Activated CD8-positive, alpha-beta T cell treated with anti-CD3 and anti-CD28 coated beads, Interleukin-2, amount 10 ng/mL, durations not matched to agents 7 days and 5 days (primary cell): ENCODE measurements at regions of chr18 and their contacts with region 1.

Region 1: GRCh38 chr18:50967714-50968661 is at the start of gene ELAC1:
- DNase-seq: peak; percentile 69
- ATAC-seq: peak; percentile 94
- H3K4me3 Mint-ChIP-seq: peak within 1 kb of the TSS; percentile 94
- H3K27ac Mint-ChIP-seq: peak within 1 kb of the TSS; percentile 94
- H3K4me1 Mint-ChIP-seq: peaks cover 20% of the 10 kb centered on the region
- H3K27me3 Mint-ChIP-seq: no peaks in the 10 kb centered on the region
- total RNA-seq, gene ELAC1: 8.7 to 9.4 TPM

Region 2: GRCh38 chr18:50878345-50879301 is 89.4 kb before region 1 on chr18 and contains the start of gene ME2:
- CTCF ChIA-PET with region 1: no interaction called
- POLR2A ChIA-PET with region 1: interaction called, 27 read pairs
- DNase-seq: peak; percentile 93
- ATAC-seq: peak; percentile 96
- H3K4me3 Mint-ChIP-seq: peak within 1 kb of the TSS; percentile 88
- H3K27ac Mint-ChIP-seq: peak within 1 kb of the TSS; percentile 98
- H3K4me1 Mint-ChIP-seq: peaks cover 24% of the 10 kb centered on the region
- H3K27me3 Mint-ChIP-seq: peaks cover 6% of the 10 kb centered on the region
- total RNA-seq, gene ME2: 91.2 to 92.5 TPM

Region 3: GRCh38 chr18:50944245-50944932 is 23.6 kb before region 1 on chr18:
- CTCF ChIA-PET with region 1: no interaction called
- POLR2A ChIA-PET with region 1: no interaction called
- DNase-seq: no peak
- ATAC-seq: no peak
- H3K4me3 Mint-ChIP-seq: no peak overlapping the region
- H3K27ac Mint-ChIP-seq: no peak overlapping the region
- H3K4me1 Mint-ChIP-seq: peaks cover 4% of the 10 kb centered on the region
- H3K27me3 Mint-ChIP-seq: no peaks in the 10 kb centered on the region

Region 4: GRCh38 chr18:51915176-51915575 is 947.2 kb after region 1 on chr18:
- CTCF ChIA-PET with region 1: no interaction called
- POLR2A ChIA-PET with region 1: no interaction called
- DNase-seq: no peak
- ATAC-seq: no peak
- H3K4me3 Mint-ChIP-seq: no peak overlapping the region
- H3K27ac Mint-ChIP-seq: no peak overlapping the region
- H3K4me1 Mint-ChIP-seq: no peaks in the 10 kb centered on the region
- H3K27me3 Mint-ChIP-seq: no peaks in the 10 kb centered on the region